Panc1 (cell line): ENCODE measurements at regions of chr5 and their contacts with region 1.

Region 1: DNA sequence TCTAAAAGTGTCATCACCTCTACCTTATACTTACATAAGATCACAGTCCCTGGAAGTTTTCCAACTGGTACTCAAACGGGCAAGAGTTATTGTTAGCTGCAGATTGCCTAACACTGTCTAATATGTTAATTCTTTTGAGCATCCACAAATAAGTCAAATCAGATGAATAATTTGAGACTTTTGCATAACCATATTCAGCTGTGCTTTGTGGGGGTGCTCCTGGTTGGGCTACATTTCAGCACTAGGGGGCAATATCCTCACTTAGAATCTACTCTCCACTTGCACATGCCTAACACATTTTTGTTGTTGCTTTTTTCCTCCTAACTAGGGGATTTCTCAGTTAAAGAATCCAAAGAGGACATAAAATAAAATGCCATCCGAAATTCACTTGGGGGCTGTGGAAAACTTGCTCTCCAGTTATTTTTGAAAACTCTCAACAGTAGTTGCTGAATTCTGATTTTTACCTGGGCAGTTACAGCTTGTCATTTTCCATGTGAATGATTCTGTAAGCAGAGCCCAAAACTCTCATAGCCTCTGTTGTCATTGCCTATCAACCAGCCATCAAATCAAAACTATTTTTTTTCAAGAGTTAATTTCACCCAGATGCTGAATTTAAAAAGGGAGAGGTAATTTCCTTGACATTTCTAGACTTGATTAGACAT is 71.5 kb downstream of the TRIM36 start:
- DNase-seq: peak; percentile 28
- ATAC-seq: peak; percentile 88
- H3K4me3 ChIP-seq: no peak overlapping the region
- H3K27ac ChIP-seq: no peak overlapping the region
- H3K4me1 ChIP-seq: no peaks in the 10 kb centered on the region
- H3K27me3 ChIP-seq: no peaks in the 10 kb centered on the region; the same call in 1 of the 2 replicates
- CTCF ChIP-seq: peak; percentile 78

Region 2: DNA sequence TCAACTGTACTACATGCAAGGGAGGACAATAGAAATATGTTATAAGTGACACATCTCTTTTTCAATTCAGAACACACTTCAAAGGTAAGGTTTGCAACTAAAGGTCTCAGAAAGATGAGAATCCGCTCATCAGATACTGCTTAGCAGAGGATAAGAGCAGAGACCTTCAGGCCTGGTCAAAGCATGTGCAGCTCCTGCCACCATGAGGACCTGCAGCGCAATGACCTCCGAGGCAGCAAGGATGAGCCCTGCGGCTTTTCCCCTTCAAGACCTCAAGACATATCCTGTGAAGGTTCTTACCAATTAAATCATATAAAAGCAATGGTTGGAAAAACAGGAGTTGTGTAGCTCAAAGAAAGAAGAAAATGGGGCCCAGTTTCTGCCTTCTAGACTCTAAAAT is 64.3 kb before region 1 on chr5:
- CTCF ChIA-PET with region 1: no interaction called
- POLR2A ChIA-PET with region 1: no interaction called
- in situ Hi-C with region 1: no loop called
- intact Hi-C with region 1: no loop called
- DNase-seq: no peak
- ATAC-seq: no peak
- H3K4me3 ChIP-seq: no peak overlapping the region
- H3K27ac ChIP-seq: no peak overlapping the region
- H3K4me1 ChIP-seq: no peaks in the 10 kb centered on the region
- H3K27me3 ChIP-seq: no peaks in the 10 kb centered on the region
- CTCF ChIP-seq: peak; percentile 28

Region 3: GRCh38 chr5:115246361-115246991 is 148.3 kb after region 1 on chr5:
- CTCF ChIA-PET with region 1: no interaction called
- POLR2A ChIA-PET with region 1: no interaction called
- in situ Hi-C with region 1: no loop called
- intact Hi-C with region 1: loop called (anchors 2 kb)
- DNase-seq: no peak
- ATAC-seq: peak; percentile 79; the same call in 1 of the 2 replicates
- H3K4me3 ChIP-seq: no peak overlapping the region
- H3K27ac ChIP-seq: no peak overlapping the region
- H3K4me1 ChIP-seq: no peaks in the 10 kb centered on the region
- H3K27me3 ChIP-seq: no peaks in the 10 kb centered on the region
- CTCF ChIP-seq: peak; percentile 79